ENCODE measurements at regions of chr1 and their contacts with region 1.

Region 1: DNA sequence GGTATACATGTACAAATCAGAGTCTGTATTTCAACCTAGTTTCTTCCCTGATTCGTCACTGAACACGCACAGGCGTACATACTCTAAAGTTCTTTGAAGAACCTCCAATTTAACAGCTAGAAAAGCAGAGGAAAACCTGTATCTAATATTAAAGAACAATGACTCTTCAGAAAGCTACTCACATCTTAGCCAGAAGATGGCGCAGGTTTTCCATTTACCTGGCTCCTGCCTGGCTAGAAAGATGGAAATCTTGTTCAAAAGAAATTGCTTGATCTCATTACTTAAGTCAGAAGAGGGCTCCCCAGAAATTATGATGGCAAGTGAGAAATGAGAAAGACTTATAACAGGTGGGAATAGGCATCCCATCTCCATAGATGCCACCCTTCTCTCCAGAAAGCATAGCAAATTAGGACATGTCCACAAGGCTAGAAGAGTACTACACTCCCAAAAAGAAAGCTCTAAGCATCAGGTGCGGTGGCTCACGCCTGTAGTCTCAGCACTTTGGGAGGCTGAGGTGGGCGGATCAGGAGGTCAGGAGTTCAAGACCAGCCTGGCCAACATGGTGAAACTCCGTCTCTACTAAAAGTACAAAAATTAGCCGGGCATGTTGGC is 19.0 kb upstream of the L1TD1 start:
- DNase-seq: no peak
- ATAC-seq: peak; percentile 75

Region 2: DNA sequence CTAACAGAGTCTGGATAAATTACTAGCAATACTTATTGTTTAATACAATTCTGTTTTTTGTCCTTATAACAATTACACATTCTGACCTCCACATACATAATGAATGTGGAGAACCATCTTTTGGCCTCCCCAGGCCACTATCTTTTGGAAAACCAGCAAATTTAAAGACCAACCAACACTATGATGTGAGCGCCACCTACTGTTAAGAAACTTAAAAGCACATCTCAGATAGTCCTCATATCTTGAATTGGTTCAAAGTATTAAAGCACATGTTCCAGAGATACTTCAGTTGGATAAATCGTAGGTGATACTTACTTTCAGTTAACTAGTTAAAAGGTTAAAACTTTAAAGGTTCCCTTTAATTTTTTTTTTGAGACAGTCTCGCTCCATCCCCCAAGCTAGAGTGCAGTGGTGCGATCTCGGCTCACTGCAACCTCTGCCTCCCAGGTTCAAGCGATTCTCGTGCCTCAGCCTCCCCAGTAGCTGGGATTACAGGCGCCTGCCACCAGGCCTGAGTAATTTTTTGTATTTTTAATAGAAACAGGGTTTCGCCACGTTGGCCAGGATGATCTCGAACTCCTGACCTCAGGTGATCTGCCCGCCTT is 231.8 kb after region 1 on chr1:
- intact Hi-C with region 1: loop called (anchors 2 kb)
- DNase-seq: no peak
- ATAC-seq: peak; percentile 81